HCT116 (cell line): ENCODE measurements at regions of chr11 and their contacts with region 1.

Region 1: DNA sequence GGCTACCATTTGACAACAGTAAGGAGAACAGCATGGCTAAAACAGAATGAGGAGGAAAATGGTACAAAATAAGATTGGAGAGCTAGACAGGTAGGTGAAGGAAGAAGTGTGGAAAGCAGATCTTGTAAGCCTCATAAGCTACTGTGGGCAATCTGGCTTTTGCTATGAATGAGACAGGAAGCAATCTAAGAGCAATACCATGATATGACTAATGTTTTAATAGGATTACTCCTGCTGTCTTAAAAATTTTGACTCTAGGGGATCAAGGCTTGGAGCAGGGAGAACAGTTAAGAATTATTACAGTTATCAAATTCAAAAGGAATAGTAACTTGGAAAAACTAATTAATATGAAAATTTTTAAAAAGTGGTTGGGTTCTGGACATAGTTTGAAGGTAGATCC is 1166.0 kb upstream of the CCDC90B start:
- DNase-seq: no peak
- ATAC-seq: no peak
- H3K4me3 ChIP-seq: no peak overlapping the region
- H3K27ac ChIP-seq: no peak overlapping the region
- H3K4me1 ChIP-seq: no peaks in the 10 kb centered on the region
- H3K27me3 ChIP-seq: no peaks in the 10 kb centered on the region
- CTCF ChIP-seq: no peak
- POLR2A ChIP-seq: no peak
- RAD21 ChIP-seq: no peak

Region 2: DNA sequence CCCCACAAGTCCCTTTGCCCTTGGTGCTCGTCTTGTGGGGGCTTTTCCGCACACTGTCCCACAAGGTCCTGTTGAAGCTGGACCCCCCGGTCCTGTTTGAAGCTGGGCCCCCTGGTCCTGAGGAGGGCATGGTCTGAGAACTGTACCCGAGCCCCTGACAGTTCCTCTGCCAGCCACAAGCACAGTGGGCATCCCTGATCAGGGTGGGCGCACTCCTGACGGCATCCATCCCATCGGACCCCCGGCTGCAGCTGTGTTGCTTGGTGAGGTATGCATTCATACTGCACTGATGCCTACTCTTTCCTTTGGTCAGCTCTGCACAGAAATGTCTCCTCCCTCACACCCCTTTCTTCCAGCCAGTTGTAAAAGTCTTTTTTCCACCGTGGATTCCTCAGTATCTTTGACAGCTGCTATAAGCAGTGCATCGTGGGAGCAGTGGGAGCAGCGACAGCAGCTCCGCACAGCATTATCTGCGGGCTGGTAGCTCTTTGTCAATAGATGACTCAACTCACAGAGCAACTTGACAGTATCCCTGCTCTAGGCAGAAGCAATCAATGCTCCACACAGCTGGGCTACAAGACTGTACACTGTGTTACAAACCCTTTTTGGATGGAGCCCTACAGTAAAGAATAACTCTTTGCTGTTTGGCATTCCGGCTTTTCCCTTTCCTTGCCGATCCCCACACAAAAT is 135.2 kb before region 1 on chr11:
- CTCF ChIA-PET with region 1: no interaction called
- POLR2A ChIA-PET with region 1: no interaction called
- RAD21 ChIA-PET with region 1: no interaction called
- intact Hi-C with region 1: loop called (anchors 5 kb)
- DNase-seq: no peak
- ATAC-seq: no peak
- H3K4me3 ChIP-seq: no peak overlapping the region
- H3K27ac ChIP-seq: no peak overlapping the region
- H3K4me1 ChIP-seq: no peaks in the 10 kb centered on the region
- H3K27me3 ChIP-seq: peaks cover 5% of the 10 kb centered on the region; the same call in 1 of the 2 replicates
- CTCF ChIP-seq: no peak
- POLR2A ChIP-seq: no peak
- RAD21 ChIP-seq: no peak

Region 3: GRCh38 chr11:84437071-84437980 is 14.9 kb before region 1 on chr11:
- CTCF ChIA-PET with region 1: no interaction called
- POLR2A ChIA-PET with region 1: no interaction called
- RAD21 ChIA-PET with region 1: no interaction called
- intact Hi-C with region 1: no loop called
- DNase-seq: no peak
- ATAC-seq: no peak
- H3K4me3 ChIP-seq: no peak overlapping the region
- H3K27ac ChIP-seq: no peak overlapping the region
- H3K4me1 ChIP-seq: no peaks in the 10 kb centered on the region
- H3K27me3 ChIP-seq: no peaks in the 10 kb centered on the region
- CTCF ChIP-seq: no peak
- POLR2A ChIP-seq: no peak
- RAD21 ChIP-seq: no peak

Region 4: GRCh38 chr11:84476581-84476980 is 24.4 kb after region 1 on chr11:
- CTCF ChIA-PET with region 1: no interaction called
- POLR2A ChIA-PET with region 1: no interaction called
- RAD21 ChIA-PET with region 1: no interaction called
- intact Hi-C with region 1: no loop called
- DNase-seq: no peak
- ATAC-seq: no peak
- H3K4me3 ChIP-seq: no peak overlapping the region
- H3K27ac ChIP-seq: no peak overlapping the region
- H3K4me1 ChIP-seq: no peaks in the 10 kb centered on the region
- H3K27me3 ChIP-seq: no peaks in the 10 kb centered on the region
- CTCF ChIP-seq: no peak
- POLR2A ChIP-seq: no peak
- RAD21 ChIP-seq: no peak

Region 5: GRCh38 chr11:84691830-84692229 is 239.6 kb after region 1 on chr11:
- CTCF ChIA-PET with region 1: no interaction called
- POLR2A ChIA-PET with region 1: no interaction called
- RAD21 ChIA-PET with region 1: no interaction called
- intact Hi-C with region 1: no loop called
- DNase-seq: no peak
- ATAC-seq: no peak
- H3K4me3 ChIP-seq: no peak overlapping the region
- H3K27ac ChIP-seq: no peak overlapping the region
- H3K4me1 ChIP-seq: no peaks in the 10 kb centered on the region
- H3K27me3 ChIP-seq: no peaks in the 10 kb centered on the region
- CTCF ChIP-seq: no peak
- POLR2A ChIP-seq: no peak
- RAD21 ChIP-seq: no peak